CD8-positive, alpha-beta memory T cell (primary cell): ENCODE measurements at regions of chr20 and their contacts with region 1.

Region 1: DNA sequence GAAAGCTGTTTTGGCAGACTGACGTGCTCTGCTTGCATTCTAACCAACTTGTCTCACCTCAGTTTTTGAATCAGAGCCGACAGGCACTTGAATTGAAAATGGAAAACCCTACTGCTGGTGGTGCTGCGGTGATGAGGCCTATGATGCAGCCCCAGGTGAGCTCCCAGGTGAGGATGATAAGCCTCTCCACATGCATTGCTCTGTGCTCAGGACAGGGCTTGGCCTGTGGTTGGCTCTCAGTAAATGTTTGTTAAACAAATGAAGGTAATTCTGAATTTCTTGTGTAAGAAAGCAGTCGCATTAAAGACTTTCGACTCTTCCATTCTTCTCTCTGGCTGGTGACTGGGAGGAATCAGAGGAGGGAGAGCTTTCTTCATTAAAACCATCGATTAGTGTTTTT is 136.3 kb downstream of the SULF2 start:
- DNase-seq: no peak
- H3K4me3 ChIP-seq: no peak overlapping the region
- H3K4me3 Mint-ChIP-seq: no peak overlapping the region
- H3K27ac ChIP-seq: no peak overlapping the region
- H3K27ac Mint-ChIP-seq: peak overlapping the region in 2 of 8 donors; percentile 36 to 92
- H3K4me1 ChIP-seq: no peaks in the 10 kb centered on the region
- H3K4me1 Mint-ChIP-seq: peaks cover 0 to 8% (median 6%) of the 10 kb centered on the region in 3 donors
- H3K27me3 ChIP-seq: no peaks in the 10 kb centered on the region
- H3K27me3 Mint-ChIP-seq: no peaks in the 10 kb centered on the region

Region 2: DNA sequence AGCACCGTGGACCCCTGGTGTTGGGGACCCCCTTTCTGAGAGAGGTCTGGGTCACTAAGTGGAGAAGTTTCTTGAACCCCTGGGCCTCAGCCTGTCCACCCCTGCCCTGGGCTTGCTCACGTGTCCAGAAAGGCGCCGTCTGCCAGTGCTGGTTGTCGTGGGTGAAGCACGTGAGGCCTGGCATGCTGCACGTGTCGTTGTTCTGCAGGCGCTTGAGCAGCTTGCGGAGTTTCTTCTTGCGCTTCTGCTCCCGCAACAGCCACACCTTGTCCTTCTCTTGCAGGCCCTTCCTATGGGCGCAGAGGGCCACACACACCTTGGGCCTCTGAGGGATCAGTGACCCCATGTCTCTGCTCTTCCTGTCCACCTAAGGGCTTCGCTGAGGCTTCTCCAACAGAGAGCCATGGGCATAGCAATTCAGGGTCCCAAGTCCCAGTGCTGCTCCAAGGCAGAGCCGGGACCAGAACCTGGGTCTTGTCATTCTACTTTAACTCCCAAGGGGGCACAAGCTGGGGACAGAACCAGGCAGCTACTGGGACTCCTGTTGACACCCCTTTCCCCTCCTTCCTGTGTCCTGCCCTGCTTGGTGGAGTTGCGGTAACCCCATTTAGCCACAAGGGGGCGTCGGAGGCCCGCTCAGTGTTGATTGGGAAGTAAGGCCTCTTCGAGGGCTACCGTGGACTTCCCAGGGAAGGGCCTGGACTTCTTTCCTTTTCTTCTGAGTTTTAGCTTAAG is 14.6 kb after region 1 on chr20:
- CTCF ChIA-PET with region 1: interaction called, 10 read pairs
- POLR2A ChIA-PET with region 1: no interaction called
- DNase-seq: peak; percentile 56 to 79 (median 59)
- H3K4me3 ChIP-seq: no peak overlapping the region
- H3K4me3 Mint-ChIP-seq: no peak overlapping the region
- H3K27ac ChIP-seq: no peak overlapping the region
- H3K27ac Mint-ChIP-seq: peak overlapping the region in 4 of 8 donors; percentile 3 to 70 (median 18)
- H3K4me1 ChIP-seq: peaks cover 7% of the 10 kb centered on the region
- H3K4me1 Mint-ChIP-seq: peaks cover 3 to 7% (median 6%) of the 10 kb centered on the region in 3 donors
- H3K27me3 ChIP-seq: no peaks in the 10 kb centered on the region
- H3K27me3 Mint-ChIP-seq: no peaks in the 10 kb centered on the region